ENCODE measurements at regions of chr3 and their contacts with region 1.

Region 1: GRCh38 chr3:52770496-52771333 is at the start of gene NEK4:
- DNase-seq: peak; percentile 96
- ATAC-seq: peak; percentile 99 to 100
- total RNA-seq, gene NEK4: 14.8 to 16.9 TPM

Region 2: GRCh38 chr3:52831500-52832301 is 61.0 kb after region 1 on chr3:
- intact Hi-C with region 1: loop called in 1 of 2 experiments (anchors 5 kb)
- DNase-seq: peak; percentile 65
- ATAC-seq: peak; percentile 10 to 50